ENCODE measurements at regions of chr7 and their contacts with region 1.

Region 1: GRCh38 chr7:27576360-27576944 is 86.2 kb downstream of the HIBADH start:
- DNase-seq: peak; percentile 21
- ATAC-seq: no peak
- H3K4me3 ChIP-seq: no peak overlapping the region
- H3K27ac ChIP-seq: no peak overlapping the region
- H3K4me1 ChIP-seq: peaks cover 27% of the 10 kb centered on the region
- H3K27me3 ChIP-seq: no peaks in the 10 kb centered on the region
- CTCF ChIP-seq: peak; percentile 52
- EP300 ChIP-seq: no peak
- POLR2A ChIP-seq: no peak
- RAD21 ChIP-seq: no peak

Region 2: DNA sequence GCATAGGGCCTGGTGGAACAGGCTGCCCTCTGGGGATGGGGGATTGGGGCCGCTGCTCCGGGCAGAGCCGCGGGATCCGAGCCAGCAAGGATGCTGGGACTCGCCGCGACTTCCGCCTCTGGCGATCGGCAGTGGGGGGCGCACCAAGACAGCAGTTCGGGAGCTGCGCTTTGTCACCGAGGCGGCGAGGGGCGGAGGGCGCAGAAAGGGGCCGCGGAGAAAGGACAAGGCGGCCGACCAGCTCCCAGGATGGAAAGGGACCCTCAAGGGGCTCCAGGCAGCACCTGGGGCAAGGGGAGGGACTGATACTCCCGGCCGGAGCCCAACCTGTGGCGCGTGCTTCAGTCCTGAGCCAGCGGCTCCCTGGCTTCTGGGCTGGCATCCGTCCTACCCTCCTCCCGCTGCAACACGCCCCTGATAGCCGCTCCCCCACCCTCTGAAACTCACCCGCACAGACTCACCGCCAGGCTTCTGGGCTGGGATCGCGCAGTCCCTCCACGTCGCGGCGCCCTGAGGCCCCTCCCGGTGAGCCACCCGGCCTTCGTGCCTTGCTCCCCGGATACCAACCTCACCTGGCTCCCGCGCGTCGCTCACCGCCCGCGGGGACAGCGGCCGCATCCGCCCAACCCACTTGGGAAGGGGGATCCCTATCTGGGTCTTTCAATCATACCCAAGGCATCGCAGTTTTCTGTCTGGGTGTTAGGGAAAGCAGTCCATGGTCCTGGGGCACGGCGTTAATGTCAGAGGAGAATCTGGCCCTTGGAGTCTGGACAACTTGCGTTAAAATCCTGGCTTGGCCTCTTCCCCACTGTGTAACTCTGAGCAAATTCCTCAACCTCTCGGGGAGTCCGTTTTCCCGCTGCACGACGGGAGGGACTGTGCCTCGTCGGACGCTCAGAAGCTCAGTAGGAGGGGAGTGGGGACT is 340.8 kb before region 1 on chr7:
- CTCF ChIA-PET with region 1: no interaction called
- POLR2A ChIA-PET with region 1: no interaction called
- in situ Hi-C with region 1: loop called (anchors 5 kb)
- intact Hi-C with region 1: no loop called
- DNase-seq: peak; percentile 13
- ATAC-seq: peak; percentile 84
- H3K4me3 ChIP-seq: peak overlapping the region; percentile 53 to 67 (median 54); a peak in 5 of 6 replicates
- H3K27ac ChIP-seq: no peak overlapping the region
- H3K4me1 ChIP-seq: no peaks in the 10 kb centered on the region
- H3K27me3 ChIP-seq: peaks cover 5 to 46% of the 10 kb centered on the region in 2 experiments; a peak in 4 of 5 replicates
- CTCF ChIP-seq: peak; percentile 90
- EP300 ChIP-seq: no peak
- POLR2A ChIP-seq: no peak
- RAD21 ChIP-seq: peak; percentile 79

Region 3: DNA sequence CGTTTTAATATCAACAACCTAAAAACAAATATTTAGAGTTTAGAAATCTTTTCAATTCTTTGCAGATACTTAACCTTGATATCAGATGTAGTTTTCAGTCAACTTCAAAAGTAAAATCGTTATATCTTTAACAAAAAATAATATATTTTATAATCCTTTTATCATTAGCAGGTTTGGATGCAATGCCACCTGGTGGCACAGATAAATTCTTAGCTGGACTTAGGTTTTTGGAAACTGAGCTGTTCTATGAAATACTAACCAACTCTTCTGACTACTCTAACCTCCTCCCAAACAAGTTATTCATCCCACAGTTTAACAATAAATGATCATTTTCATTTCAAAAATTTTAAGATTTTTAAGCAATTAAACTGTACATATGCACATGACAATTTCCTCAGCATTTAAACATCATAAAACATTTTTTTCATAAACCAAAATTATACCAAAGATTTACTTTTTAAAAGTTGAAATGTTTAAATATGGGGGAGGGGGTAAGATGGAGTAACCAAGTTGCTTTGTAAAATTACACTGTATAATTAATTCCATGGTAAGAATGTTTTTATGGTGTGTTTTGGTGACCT is 29.3 kb after region 1 on chr7:
- CTCF ChIA-PET with region 1: no interaction called
- POLR2A ChIA-PET with region 1: no interaction called
- in situ Hi-C with region 1: no loop called
- intact Hi-C with region 1: loop called (anchors 1 kb)
- DNase-seq: peak; percentile 39
- ATAC-seq: peak; percentile 64; the same call in 2 of the 3 replicates
- H3K4me3 ChIP-seq: peak overlapping the region; percentile 9 to 38 (median 13); a peak in 5 of 6 replicates
- H3K27ac ChIP-seq: peak overlapping the region; percentile 70
- H3K4me1 ChIP-seq: peaks cover 63% of the 10 kb centered on the region
- H3K27me3 ChIP-seq: no peaks in the 10 kb centered on the region
- CTCF ChIP-seq: peak; percentile 34
- EP300 ChIP-seq: no peak
- POLR2A ChIP-seq: no peak
- RAD21 ChIP-seq: no peak

Region 4: DNA sequence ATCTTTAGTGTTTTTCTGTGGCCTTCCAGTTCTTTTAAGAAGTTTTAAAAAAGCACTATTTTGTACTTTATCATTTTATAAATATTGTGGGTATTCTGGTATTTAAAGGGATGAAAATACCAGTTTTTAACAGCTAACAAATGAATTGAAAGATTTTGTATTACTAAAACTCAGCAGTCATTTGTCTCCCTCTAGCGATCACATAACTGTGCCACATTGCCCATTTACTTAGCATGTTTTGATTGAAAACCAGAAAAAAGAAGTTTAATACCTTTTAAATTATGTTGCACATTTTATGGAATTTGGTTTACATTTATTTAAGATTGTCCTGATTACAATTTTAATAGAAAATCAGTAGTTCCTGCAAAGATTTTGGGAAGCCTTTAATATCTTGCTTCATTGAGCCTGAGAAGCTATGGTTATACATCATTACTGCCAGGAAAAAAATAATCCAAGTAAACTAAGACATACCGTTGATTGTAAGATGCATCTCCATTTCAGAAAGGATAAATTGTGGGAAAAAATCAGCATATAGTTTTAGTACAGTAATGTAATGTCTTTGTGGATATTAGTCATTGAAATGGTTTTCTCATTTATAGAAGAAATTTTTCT is 198.4 kb after region 1 on chr7:
- CTCF ChIA-PET with region 1: no interaction called
- POLR2A ChIA-PET with region 1: no interaction called
- in situ Hi-C with region 1: no loop called
- intact Hi-C with region 1: loop called (anchors 2 kb)
- DNase-seq: peak; percentile 39
- ATAC-seq: no peak
- H3K4me3 ChIP-seq: no peak overlapping the region
- H3K27ac ChIP-seq: no peak overlapping the region
- H3K4me1 ChIP-seq: no peaks in the 10 kb centered on the region
- H3K27me3 ChIP-seq: no peaks in the 10 kb centered on the region
- CTCF ChIP-seq: peak; percentile 60
- EP300 ChIP-seq: no peak
- POLR2A ChIP-seq: no peak
- RAD21 ChIP-seq: peak; percentile 36; the same call in 1 of the 2 replicates